ENCODE measurements at regions of chr20 and their contacts with region 1.

Region 1: DNA sequence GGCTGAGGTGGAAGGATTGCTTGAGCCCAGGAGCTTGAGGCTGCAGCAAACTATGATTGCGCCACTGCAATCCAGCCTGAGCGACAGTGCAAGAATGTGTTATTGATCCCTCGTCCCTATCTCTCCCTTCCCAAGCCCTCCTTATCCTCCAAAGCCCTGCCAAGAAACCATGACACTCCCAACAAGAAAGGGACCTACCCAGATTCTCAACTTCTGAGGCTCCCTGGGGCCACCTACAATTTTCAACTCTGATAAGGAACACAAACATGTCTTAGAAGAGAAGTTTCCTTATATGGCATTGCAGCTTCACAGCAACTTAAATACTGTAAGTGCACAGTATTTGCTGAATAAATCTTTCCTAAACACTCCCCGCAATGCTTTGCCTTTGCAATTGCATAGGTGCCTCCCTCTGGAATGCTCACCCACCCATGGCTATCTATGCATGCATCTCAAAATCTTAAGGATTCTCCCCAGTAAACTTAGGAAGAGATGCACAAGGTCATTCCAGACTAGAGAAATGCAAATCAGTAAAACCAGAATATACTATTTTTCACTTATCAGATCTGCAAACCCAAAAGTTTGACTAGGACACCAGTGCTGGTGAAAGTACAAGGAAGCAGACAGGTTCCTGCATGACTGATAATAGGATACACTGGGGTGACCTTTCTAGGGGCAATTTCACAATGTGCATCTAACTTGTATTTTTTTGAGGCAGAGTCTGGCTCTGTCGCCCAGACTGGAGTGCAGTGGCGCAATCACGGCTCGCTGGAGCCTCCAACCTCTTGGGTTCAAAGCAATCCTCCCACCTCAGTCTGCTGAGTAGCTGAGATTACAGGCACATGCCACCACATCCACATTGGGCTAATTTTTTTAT is 11.6 kb downstream of the COMMD7 start:
- DNase-seq: peak; percentile 98 to 99
- H3K4me3 ChIP-seq: no peak overlapping the region
- H3K4me3 Mint-ChIP-seq: peak overlapping the region; percentile 20
- H3K27ac Mint-ChIP-seq: peak overlapping the region; percentile 88
- H3K4me1 ChIP-seq: peaks cover 51% of the 10 kb centered on the region
- H3K4me1 Mint-ChIP-seq: peaks cover 54% of the 10 kb centered on the region
- H3K27me3 ChIP-seq: no peaks in the 10 kb centered on the region
- H3K27me3 Mint-ChIP-seq: no peaks in the 10 kb centered on the region
- CTCF ChIP-seq: no peak

Region 2: DNA sequence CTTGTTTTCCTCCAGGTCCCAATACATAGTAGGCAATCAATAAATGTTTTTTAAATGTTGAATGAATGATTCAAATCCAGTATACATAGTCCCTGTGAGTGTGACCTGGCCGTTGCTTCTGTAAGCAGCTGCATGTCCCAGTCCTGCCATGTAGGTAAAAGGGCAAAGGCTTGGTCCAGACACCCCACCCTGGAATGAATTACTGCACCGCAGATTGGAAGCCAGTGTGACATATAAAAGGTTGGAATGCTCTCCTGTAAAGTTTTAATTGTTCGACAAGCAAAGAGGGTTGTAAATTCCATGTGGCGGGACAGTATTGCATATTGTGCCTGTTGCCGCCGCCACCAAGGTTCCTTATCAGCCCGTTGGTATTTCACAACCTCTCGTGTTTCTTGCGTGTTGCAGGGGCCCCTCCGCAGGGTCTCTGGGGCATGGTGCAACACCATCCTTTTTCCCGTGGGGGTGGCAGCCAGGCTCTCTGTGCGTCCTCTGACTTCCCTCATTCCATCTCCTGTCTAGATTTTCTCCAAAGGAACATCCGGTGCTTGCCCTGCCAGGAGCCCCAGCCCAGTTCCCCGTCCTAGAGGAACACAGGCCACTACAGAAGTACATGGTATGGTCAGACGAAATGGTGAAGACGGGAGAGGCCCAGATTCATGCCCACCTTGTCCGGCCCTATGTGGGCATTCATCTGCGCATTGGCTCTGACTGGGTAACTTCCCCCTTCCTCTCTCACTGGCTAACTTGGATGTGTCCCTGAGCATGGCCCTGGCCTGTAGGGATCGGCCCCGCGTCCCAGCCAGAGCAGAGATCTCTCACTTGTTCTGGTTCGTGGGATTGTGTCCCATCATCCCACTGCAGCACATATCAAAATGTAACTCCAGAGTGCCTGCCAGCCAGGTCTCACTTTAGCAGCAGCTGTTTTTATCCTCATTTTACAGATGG is 503.6 kb before region 1 on chr20:
- CTCF ChIA-PET with region 1: no interaction called
- POLR2A ChIA-PET with region 1: no interaction called
- intact Hi-C with region 1: loop called (anchors 1 kb)
- DNase-seq: peak; percentile 100
- H3K4me3 ChIP-seq: no peak overlapping the region
- H3K4me3 Mint-ChIP-seq: peak overlapping the region; percentile 59
- H3K27ac Mint-ChIP-seq: peak overlapping the region; percentile 99
- H3K4me1 ChIP-seq: peaks cover 57% of the 10 kb centered on the region
- H3K4me1 Mint-ChIP-seq: peaks cover 71% of the 10 kb centered on the region
- H3K27me3 ChIP-seq: no peaks in the 10 kb centered on the region
- H3K27me3 Mint-ChIP-seq: no peaks in the 10 kb centered on the region
- CTCF ChIP-seq: no peak

Region 3: GRCh38 chr20:32674362-32674789 is 57.3 kb before region 1 on chr20:
- CTCF ChIA-PET with region 1: interaction called, 12 read pairs
- POLR2A ChIA-PET with region 1: interaction called, 3 read pairs
- intact Hi-C with region 1: loop called (anchors 1 kb)
- DNase-seq: peak; percentile 79 to 91
- H3K4me3 ChIP-seq: no peak overlapping the region
- H3K4me3 Mint-ChIP-seq: no peak overlapping the region
- H3K27ac Mint-ChIP-seq: peak overlapping the region; percentile 74
- H3K4me1 ChIP-seq: peaks cover 13% of the 10 kb centered on the region; the same call in 1 of the 2 replicates
- H3K4me1 Mint-ChIP-seq: peaks cover 23% of the 10 kb centered on the region
- H3K27me3 ChIP-seq: no peaks in the 10 kb centered on the region
- H3K27me3 Mint-ChIP-seq: no peaks in the 10 kb centered on the region
- CTCF ChIP-seq: peak; percentile 97 to 99

Region 4: DNA sequence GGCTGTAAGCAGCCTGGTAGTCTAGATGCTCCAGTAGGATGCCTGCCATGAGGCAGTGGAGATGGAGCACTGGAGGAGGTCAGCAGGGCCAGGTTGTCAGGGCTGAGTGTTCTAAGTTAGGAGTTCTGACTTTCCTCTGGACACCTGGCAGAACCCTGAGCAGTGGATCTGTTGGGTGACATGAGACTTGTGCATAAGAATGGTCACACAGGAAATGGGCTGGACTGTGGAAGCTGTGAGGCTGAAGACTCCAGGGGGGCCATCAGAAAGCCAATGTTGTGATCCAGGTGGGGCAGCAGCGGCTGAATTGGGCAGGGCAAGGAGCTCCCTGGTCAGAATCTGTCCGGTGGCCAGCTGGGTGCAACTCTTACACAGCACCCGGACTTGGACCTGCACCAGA is 34.0 kb before region 1 on chr20:
- CTCF ChIA-PET with region 1: interaction called, 7 read pairs
- POLR2A ChIA-PET with region 1: interaction called, 5 read pairs
- intact Hi-C with region 1: loop called (anchors 1 kb)
- DNase-seq: no peak
- H3K4me3 ChIP-seq: no peak overlapping the region
- H3K4me3 Mint-ChIP-seq: no peak overlapping the region
- H3K27ac Mint-ChIP-seq: peak overlapping the region; percentile 43
- H3K4me1 ChIP-seq: peaks cover 19% of the 10 kb centered on the region
- H3K4me1 Mint-ChIP-seq: peaks cover 31% of the 10 kb centered on the region
- H3K27me3 ChIP-seq: no peaks in the 10 kb centered on the region
- H3K27me3 Mint-ChIP-seq: no peaks in the 10 kb centered on the region
- CTCF ChIP-seq: no peak

Region 5: GRCh38 chr20:32743237-32744112 is 11.8 kb after region 1 on chr20 and contains the start of gene COMMD7:
- CTCF ChIA-PET with region 1: interaction called, 16 read pairs
- POLR2A ChIA-PET with region 1: interaction called, 19 read pairs
- intact Hi-C with region 1: loop called (anchors 1 kb)
- DNase-seq: peak; percentile 89 to 90
- H3K4me3 ChIP-seq: peak within 1 kb of the TSS; percentile 88
- H3K4me3 Mint-ChIP-seq: peak within 1 kb of the TSS; percentile 89
- H3K27ac Mint-ChIP-seq: peak within 1 kb of the TSS; percentile 87
- H3K4me1 ChIP-seq: peaks cover 39% of the 10 kb centered on the region
- H3K4me1 Mint-ChIP-seq: peaks cover 20% of the 10 kb centered on the region
- H3K27me3 ChIP-seq: no peaks in the 10 kb centered on the region
- H3K27me3 Mint-ChIP-seq: no peaks in the 10 kb centered on the region
- CTCF ChIP-seq: no peak
- total RNA-seq, gene COMMD7: 142 and 160 TPM in 2 replicates